ENCODE measurements at regions of chr5 and their contacts with region 1.

Region 1: GRCh38 chr5:111367081-111367480 is 142.9 kb downstream of the CAMK4 start:
- DNase-seq: peak; percentile 98
- H3K4me3 ChIP-seq: no peak overlapping the region
- H3K27ac ChIP-seq: peak overlapping the region; percentile 87
- H3K4me1 ChIP-seq: peaks cover 12% of the 10 kb centered on the region
- H3K27me3 ChIP-seq: no peaks in the 10 kb centered on the region
- CTCF ChIP-seq: no peak

Region 2: GRCh38 chr5:111234125-111234524 is 133.0 kb before region 1 on chr5:
- CTCF ChIA-PET with region 1: no interaction called
- dilution Hi-C with region 1: no loop called
- in situ Hi-C with region 1: no loop called
- intact Hi-C with region 1: no loop called
- DNase-seq: no peak
- H3K4me3 ChIP-seq: no peak overlapping the region
- H3K27ac ChIP-seq: no peak overlapping the region
- H3K4me1 ChIP-seq: peaks cover 6% of the 10 kb centered on the region
- H3K27me3 ChIP-seq: no peaks in the 10 kb centered on the region
- CTCF ChIP-seq: no peak

Region 3: GRCh38 chr5:111345728-111346127 is 21.4 kb before region 1 on chr5:
- CTCF ChIA-PET with region 1: no interaction called
- dilution Hi-C with region 1: no loop called
- in situ Hi-C with region 1: no loop called
- intact Hi-C with region 1: no loop called
- DNase-seq: peak; percentile 2
- H3K4me3 ChIP-seq: no peak overlapping the region
- H3K27ac ChIP-seq: no peak overlapping the region
- H3K4me1 ChIP-seq: peaks cover 11% of the 10 kb centered on the region
- H3K27me3 ChIP-seq: no peaks in the 10 kb centered on the region
- CTCF ChIP-seq: no peak

Region 4: GRCh38 chr5:111411301-111411700 is 44.2 kb after region 1 on chr5:
- CTCF ChIA-PET with region 1: no interaction called
- dilution Hi-C with region 1: no loop called
- in situ Hi-C with region 1: no loop called
- intact Hi-C with region 1: loop called (anchors 2 kb)
- DNase-seq: peak; percentile 66
- H3K4me3 ChIP-seq: no peak overlapping the region
- H3K27ac ChIP-seq: no peak overlapping the region
- H3K4me1 ChIP-seq: peaks cover 10% of the 10 kb centered on the region
- H3K27me3 ChIP-seq: no peaks in the 10 kb centered on the region
- CTCF ChIP-seq: no peak

Measured in mammary epithelial cell (primary cell).